ENCODE measurements at regions of chr10 and their contacts with region 1.

Region 1: GRCh38 chr10:87659571-87660483 is at the start of gene PAPSS2:
- DNase-seq: peak; percentile 68
- ATAC-seq: peak; percentile 71
- H3K4me3 ChIP-seq: peak within 1 kb of the TSS; percentile 98
- H3K27ac ChIP-seq: peak within 1 kb of the TSS; percentile 85
- H3K4me1 ChIP-seq: peaks cover 14% of the 10 kb centered on the region
- H3K27me3 ChIP-seq: no peaks in the 10 kb centered on the region
- CTCF ChIP-seq: no peak
- POLR2A ChIP-seq: peak; percentile 63
- RAD21 ChIP-seq: no peak
- total RNA-seq, gene PAPSS2: 55.0 and 58.6 TPM in 2 replicates

Region 2: GRCh38 chr10:86716466-86716865 is 943.4 kb before region 1 on chr10:
- CTCF ChIA-PET with region 1: no interaction called
- POLR2A ChIA-PET with region 1: no interaction called
- dilution Hi-C with region 1: no loop called
- in situ Hi-C with region 1: no loop called
- intact Hi-C with region 1: no loop called
- DNase-seq: no peak
- ATAC-seq: no peak
- H3K4me3 ChIP-seq: no peak overlapping the region
- H3K27ac ChIP-seq: no peak overlapping the region
- H3K4me1 ChIP-seq: peaks cover 4% of the 10 kb centered on the region; the same call in 1 of the 2 replicates
- H3K27me3 ChIP-seq: peaks cover 4% of the 10 kb centered on the region; the same call in 1 of the 2 replicates
- CTCF ChIP-seq: no peak
- POLR2A ChIP-seq: no peak
- RAD21 ChIP-seq: no peak

Region 3: GRCh38 chr10:87531908-87532622 is 127.8 kb before region 1 on chr10:
- CTCF ChIA-PET with region 1: no interaction called
- POLR2A ChIA-PET with region 1: no interaction called
- dilution Hi-C with region 1: no loop called
- in situ Hi-C with region 1: no loop called
- intact Hi-C with region 1: loop called (anchors 1 kb)
- DNase-seq: peak; percentile 79
- ATAC-seq: peak; percentile 85
- H3K4me3 ChIP-seq: no peak overlapping the region
- H3K27ac ChIP-seq: no peak overlapping the region
- H3K4me1 ChIP-seq: peaks cover 3% of the 10 kb centered on the region; the same call in 1 of the 2 replicates
- H3K27me3 ChIP-seq: no peaks in the 10 kb centered on the region
- CTCF ChIP-seq: no peak
- POLR2A ChIP-seq: no peak
- RAD21 ChIP-seq: no peak

Region 4: GRCh38 chr10:87705346-87705745 is 45.5 kb after region 1 on chr10:
- CTCF ChIA-PET with region 1: no interaction called
- POLR2A ChIA-PET with region 1: no interaction called
- dilution Hi-C with region 1: no loop called
- in situ Hi-C with region 1: no loop called
- intact Hi-C with region 1: loop called (anchors 5 kb)
- DNase-seq: peak; percentile 44
- ATAC-seq: peak; percentile 30
- H3K4me3 ChIP-seq: no peak overlapping the region
- H3K27ac ChIP-seq: no peak overlapping the region
- H3K4me1 ChIP-seq: peaks cover 8% of the 10 kb centered on the region
- H3K27me3 ChIP-seq: no peaks in the 10 kb centered on the region
- CTCF ChIP-seq: no peak
- POLR2A ChIP-seq: no peak
- RAD21 ChIP-seq: no peak

Region 5: DNA sequence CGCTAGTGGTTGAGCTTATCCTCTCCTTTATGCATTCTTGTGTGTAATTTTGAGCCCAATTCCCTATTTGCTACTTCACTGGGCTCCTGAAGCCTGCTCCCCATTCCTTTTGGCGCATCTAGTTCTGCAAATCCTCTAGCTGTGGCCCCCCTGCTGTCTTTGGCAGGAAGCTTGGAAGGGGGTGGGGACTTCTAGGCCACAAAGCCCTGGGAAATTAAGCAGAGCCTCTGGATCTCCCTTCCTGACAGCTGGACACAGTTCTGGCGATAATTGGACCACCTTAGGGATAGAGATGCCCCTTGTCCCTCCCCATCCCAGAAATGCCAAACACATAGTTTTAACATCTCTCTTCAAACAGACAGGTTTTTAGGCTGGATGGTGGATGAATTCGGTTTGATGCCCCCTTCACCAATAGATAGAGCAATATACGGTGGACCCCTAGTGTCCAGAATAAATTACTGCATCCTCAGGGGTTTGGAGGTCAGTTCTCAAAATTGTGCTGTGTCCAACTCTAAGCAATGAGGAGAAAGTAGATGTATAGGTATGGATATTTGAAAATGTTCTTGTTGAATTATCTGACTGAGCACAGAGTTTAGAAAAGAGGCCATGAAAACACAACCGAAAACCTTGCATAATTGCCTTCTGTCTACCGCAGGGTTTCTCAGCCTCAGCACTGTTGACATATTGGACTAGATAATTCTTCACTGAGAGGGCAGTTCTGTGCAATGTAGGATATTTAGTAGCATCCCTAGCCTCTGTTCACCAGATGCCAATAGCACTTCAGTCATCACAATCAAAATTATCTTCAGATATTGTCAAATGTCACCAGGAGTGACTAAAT is 75.4 kb after region 1 on chr10:
- CTCF ChIA-PET with region 1: interaction called, 5 read pairs
- POLR2A ChIA-PET with region 1: interaction called, 3 read pairs
- dilution Hi-C with region 1: no loop called
- in situ Hi-C with region 1: no loop called
- intact Hi-C with region 1: loop called (anchors 1 kb)
- DNase-seq: peak; percentile 51
- ATAC-seq: peak; percentile 89
- H3K4me3 ChIP-seq: no peak overlapping the region
- H3K27ac ChIP-seq: no peak overlapping the region
- H3K4me1 ChIP-seq: peaks cover 4% of the 10 kb centered on the region; the same call in 1 of the 2 replicates
- H3K27me3 ChIP-seq: no peaks in the 10 kb centered on the region
- CTCF ChIP-seq: peak; percentile 80
- POLR2A ChIP-seq: no peak
- RAD21 ChIP-seq: peak; percentile 80

Region 6: DNA sequence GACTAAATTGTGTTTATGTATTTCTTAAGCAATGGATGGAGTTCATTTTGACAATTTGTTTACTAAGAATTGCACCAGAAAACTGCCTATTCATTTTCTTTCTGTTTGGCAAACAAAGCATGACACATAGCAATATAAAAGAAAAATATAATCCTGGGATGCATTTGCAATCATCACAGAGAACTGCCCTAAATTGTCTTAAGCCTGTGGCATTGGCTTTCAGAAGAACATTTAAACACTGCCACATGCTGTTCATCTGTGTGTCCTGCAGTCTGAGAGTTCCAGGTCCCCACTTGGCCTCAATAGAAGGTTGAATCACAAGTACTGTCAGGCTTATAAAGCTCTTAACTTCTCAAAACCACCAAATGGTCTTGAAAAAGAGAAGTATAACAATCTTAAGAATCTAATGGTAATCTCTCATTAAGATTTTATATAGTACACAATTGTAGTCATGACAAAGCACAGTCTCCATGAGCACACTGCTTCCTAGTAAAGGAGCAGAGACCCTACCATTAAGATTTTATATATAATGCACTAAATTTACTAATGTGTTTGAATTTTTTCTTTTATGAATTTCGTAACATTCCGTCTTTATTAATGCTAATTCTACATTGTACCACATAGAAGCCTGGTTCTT is 893.4 kb after region 1 on chr10:
- CTCF ChIA-PET with region 1: no interaction called
- POLR2A ChIA-PET with region 1: no interaction called
- dilution Hi-C with region 1: no loop called
- in situ Hi-C with region 1: no loop called
- intact Hi-C with region 1: loop called (anchors 2 kb)
- DNase-seq: peak; percentile 84
- ATAC-seq: peak; percentile 96
- H3K4me3 ChIP-seq: no peak overlapping the region
- H3K27ac ChIP-seq: no peak overlapping the region
- H3K4me1 ChIP-seq: no peaks in the 10 kb centered on the region; the same call in 1 of the 2 replicates
- H3K27me3 ChIP-seq: no peaks in the 10 kb centered on the region
- CTCF ChIP-seq: peak; percentile 79
- POLR2A ChIP-seq: no peak
- RAD21 ChIP-seq: peak; percentile 88

Measured in IMR-90 (cell line).